HepG2 (cell line): ENCODE measurements at regions of chr1 and their contacts with region 1.

Region 1: GRCh38 chr1:6624710-6625583 is at the start of gene THAP3:
- DNase-seq: peak; percentile 73
- ATAC-seq: peak; percentile 88
- H3K4me3 ChIP-seq: peak within 1 kb of the TSS; percentile 74 to 89 (median 88)
- H3K27ac ChIP-seq: peak within 1 kb of the TSS; percentile 73
- H3K4me1 ChIP-seq: peaks cover 31% of the 10 kb centered on the region
- H3K27me3 ChIP-seq: no peaks in the 10 kb centered on the region; a peak in 1 of 5 replicates
- CTCF ChIP-seq: peak; percentile 71
- EP300 ChIP-seq: no peak
- POLR2A ChIP-seq: peak in 1 of 2 experiments; percentile 57; a peak in 1 of 4 replicates
- RAD21 ChIP-seq: peak; percentile 18; the same call in 1 of the 2 replicates
- total RNA-seq, gene THAP3: 14.9 and 15.0 TPM in 2 replicates

Region 2: GRCh38 chr1:6579374-6580118 is 45.4 kb before region 1 on chr1 and contains the start of gene ZBTB48:
- CTCF ChIA-PET with region 1: no interaction called
- POLR2A ChIA-PET with region 1: interaction called, 5 read pairs
- in situ Hi-C with region 1: no loop called
- intact Hi-C with region 1: loop called (anchors 5 kb)
- DNase-seq: peak; percentile 94
- ATAC-seq: peak; percentile 84
- H3K4me3 ChIP-seq: peak within 1 kb of the TSS; percentile 88 to 98 (median 91)
- H3K27ac ChIP-seq: peak within 1 kb of the TSS; percentile 84
- H3K4me1 ChIP-seq: peaks cover 57% of the 10 kb centered on the region
- H3K27me3 ChIP-seq: no peaks in the 10 kb centered on the region
- CTCF ChIP-seq: peak; percentile 45
- EP300 ChIP-seq: no peak
- POLR2A ChIP-seq: peak; percentile 74 to 90
- RAD21 ChIP-seq: no peak
- total RNA-seq, gene ZBTB48: 13.8 and 17.1 TPM in 2 replicates

Region 3: DNA sequence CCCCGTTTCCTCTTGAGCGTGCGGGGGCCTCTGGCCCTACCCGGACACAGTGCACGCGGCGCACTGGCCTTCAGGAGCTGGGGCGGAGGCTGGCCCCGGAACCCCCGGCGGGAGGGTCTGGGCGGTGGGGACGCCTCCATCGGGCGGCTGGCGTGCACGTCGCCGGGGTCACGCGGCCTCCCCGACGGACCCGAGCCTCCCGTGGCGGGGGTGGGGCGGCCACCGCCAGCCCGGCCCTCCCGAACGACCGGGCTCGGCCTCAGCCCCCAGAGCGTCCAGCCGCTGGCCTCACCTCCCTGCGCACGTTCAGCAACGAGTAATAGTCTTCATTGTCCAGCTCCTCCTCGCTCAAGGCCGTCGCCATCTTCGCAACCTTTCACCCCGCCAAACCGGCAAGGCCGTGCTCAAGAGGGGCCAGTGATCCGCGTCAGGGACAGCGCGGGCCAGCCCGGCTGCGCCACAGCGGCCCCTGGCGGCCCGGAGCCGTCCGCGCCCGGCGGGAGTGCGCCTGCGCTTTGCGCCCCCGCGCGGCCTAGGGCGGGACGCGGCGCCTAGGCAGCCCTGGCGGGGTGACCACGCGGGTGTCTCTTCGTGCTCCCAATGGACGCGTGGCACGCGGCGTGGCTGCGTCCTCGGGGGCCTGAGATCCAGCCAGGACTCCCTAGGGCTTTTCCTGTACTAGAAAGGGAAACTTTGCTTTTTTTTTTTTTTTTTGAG is 76.6 kb after region 1 on chr1 and contains the start of gene DNAJC11:
- CTCF ChIA-PET with region 1: no interaction called
- POLR2A ChIA-PET with region 1: no interaction called
- in situ Hi-C with region 1: no loop called
- intact Hi-C with region 1: no loop called
- DNase-seq: peak; percentile 80
- ATAC-seq: peak; percentile 91
- H3K4me3 ChIP-seq: peak within 1 kb of the TSS; percentile 93 to 99 (median 99)
- H3K27ac ChIP-seq: peak within 1 kb of the TSS; percentile 96
- H3K4me1 ChIP-seq: peaks cover 23% of the 10 kb centered on the region
- H3K27me3 ChIP-seq: no peaks in the 10 kb centered on the region; a peak in 1 of 5 replicates
- CTCF ChIP-seq: peak; percentile 87
- EP300 ChIP-seq: peak in 1 of 2 experiments; percentile 54; a peak in 1 of 4 replicates
- POLR2A ChIP-seq: peak; percentile 79 to 95
- RAD21 ChIP-seq: peak; percentile 48
- total RNA-seq, gene DNAJC11: 47.6 and 56.8 TPM in 2 replicates